ENCODE measurements at regions of chr10 and their contacts with region 1.

Region 1: DNA sequence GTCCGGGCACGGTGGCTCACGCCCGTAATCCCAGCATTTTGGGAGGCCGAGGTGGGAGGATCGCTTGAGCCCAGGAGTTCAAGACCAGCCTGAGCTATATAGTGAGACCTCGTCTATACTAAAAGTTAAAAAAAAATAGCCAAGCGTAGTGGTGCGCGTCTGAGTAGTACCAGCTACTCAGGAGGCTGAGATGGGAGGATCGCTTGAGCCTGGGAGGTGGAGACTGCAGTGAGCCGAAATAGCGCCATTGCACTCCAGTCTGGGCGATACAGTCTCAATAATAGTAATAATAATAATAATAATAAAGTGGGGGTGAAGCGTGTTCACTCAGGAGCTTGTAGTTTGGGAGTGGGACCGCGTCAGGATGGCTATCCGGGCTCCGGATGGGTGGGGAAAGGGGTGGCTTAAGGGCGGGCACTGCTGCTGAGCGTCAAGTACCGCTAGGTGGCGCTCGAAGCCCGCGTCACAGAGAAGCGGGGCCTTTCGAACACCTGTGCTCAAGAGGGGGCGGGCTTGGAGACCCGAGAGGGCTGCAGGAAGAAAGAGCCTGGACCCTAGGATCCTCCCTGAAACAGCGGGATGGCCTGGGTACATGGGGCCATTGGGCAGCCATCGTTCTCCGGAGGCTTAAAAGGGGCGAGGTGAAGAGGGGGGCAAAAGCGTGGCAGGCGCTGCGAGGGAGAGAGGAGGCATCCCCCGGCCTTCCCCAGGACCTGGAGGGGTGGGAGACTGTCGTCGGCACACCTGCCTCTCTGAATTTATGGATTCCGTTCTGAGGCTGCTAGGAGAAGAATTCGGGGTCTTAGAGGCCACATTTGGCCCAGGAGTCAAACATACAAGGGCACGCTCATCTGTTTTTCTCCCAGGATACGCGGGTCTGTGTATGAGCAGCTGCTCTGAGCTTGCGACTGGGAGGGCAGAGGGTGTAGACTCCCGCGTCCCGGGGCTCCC is 14.5 kb downstream of the LBX1 start:
- DNase-seq: peak; percentile 84
- H3K4me3 ChIP-seq: peak overlapping the region; percentile 19 to 67; a peak in 3 of 4 replicates
- H3K27ac ChIP-seq: no peak overlapping the region
- H3K4me1 ChIP-seq: peaks cover 0 to 35% of the 10 kb centered on the region in 2 experiments; a peak in 2 of 4 replicates
- H3K27me3 ChIP-seq: peaks cover 86% of the 10 kb centered on the region
- CTCF ChIP-seq: peak; percentile 93
- EP300 ChIP-seq: no peak
- RAD21 ChIP-seq: peak; percentile 77

Region 2: DNA sequence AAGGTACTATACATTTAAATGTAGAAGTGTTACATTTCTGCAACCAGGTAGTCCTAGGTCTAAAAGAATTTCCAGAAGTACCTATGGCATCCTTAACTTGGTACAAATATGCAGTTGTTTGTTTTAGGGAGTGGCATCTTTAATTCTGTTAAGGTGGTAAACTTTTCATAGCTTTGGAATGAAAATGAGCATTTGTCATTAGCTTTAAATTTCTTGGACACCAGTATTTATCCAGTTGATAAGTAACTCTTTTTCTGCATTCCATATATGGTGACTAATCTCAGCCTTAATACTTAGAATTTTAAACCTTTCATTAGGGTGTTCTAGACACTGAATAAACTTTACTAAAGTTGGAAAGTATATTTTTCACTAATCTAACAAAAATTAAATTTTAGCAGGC is 291.1 kb before region 1 on chr10:
- CTCF ChIA-PET with region 1: no interaction called
- POLR2A ChIA-PET with region 1: no interaction called
- DNase-seq: no peak
- H3K4me3 ChIP-seq: no peak overlapping the region
- H3K27ac ChIP-seq: no peak overlapping the region
- H3K4me1 ChIP-seq: no peaks in the 10 kb centered on the region
- H3K27me3 ChIP-seq: no peaks in the 10 kb centered on the region
- CTCF ChIP-seq: no peak
- EP300 ChIP-seq: no peak
- RAD21 ChIP-seq: no peak

Region 3: DNA sequence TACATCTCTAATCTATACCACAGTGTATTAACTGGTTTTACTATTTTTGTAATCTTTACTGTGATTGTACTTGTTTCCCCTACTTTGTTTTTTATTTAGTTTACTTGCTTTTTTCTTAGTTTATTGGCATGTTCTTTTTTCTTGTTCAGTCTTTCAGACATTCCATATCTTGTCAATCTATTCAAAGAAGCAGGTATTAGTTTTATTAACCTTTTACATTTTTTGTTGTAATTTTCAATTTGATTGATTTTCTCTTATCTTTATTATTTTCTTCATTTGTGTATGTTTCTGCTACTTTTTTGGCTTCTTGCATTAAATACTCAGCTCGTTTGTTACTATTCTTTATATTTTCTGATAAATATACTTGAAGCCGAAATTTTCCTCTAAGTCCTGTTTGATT is 42.0 kb before region 1 on chr10:
- CTCF ChIA-PET with region 1: interaction called, 38 read pairs
- POLR2A ChIA-PET with region 1: no interaction called
- DNase-seq: no peak
- H3K4me3 ChIP-seq: no peak overlapping the region
- H3K27ac ChIP-seq: no peak overlapping the region
- H3K4me1 ChIP-seq: no peaks in the 10 kb centered on the region
- H3K27me3 ChIP-seq: peaks cover 20% of the 10 kb centered on the region; the same call in 1 of the 2 replicates
- CTCF ChIP-seq: no peak
- EP300 ChIP-seq: no peak
- RAD21 ChIP-seq: no peak

Region 4: GRCh38 chr10:101258179-101258885 is 43.6 kb after region 1 on chr10:
- CTCF ChIA-PET with region 1: interaction called, 10 read pairs
- POLR2A ChIA-PET with region 1: no interaction called
- DNase-seq: no peak
- H3K4me3 ChIP-seq: no peak overlapping the region; a peak in 1 of 4 replicates
- H3K27ac ChIP-seq: no peak overlapping the region
- H3K4me1 ChIP-seq: no peaks in the 10 kb centered on the region
- H3K27me3 ChIP-seq: peaks cover 5% of the 10 kb centered on the region; the same call in 1 of the 2 replicates
- CTCF ChIP-seq: no peak
- EP300 ChIP-seq: no peak
- RAD21 ChIP-seq: no peak

Region 5: GRCh38 chr10:101446947-101447346 is 232.2 kb after region 1 on chr10:
- CTCF ChIA-PET with region 1: interaction called, 32 read pairs
- POLR2A ChIA-PET with region 1: no interaction called
- DNase-seq: no peak
- H3K4me3 ChIP-seq: no peak overlapping the region
- H3K27ac ChIP-seq: no peak overlapping the region
- H3K4me1 ChIP-seq: peaks cover 0 to 27% of the 10 kb centered on the region in 2 experiments; a peak in 2 of 4 replicates
- H3K27me3 ChIP-seq: no peaks in the 10 kb centered on the region
- CTCF ChIP-seq: no peak
- EP300 ChIP-seq: 0 out of 4 replicates have a peak, but pooled peaks of 1 of the 2 experiments have one; percentile 13
- RAD21 ChIP-seq: no peak

Region 6: GRCh38 chr10:101495324-101495925 is 280.7 kb after region 1 on chr10:
- CTCF ChIA-PET with region 1: interaction called, 23 read pairs
- POLR2A ChIA-PET with region 1: no interaction called
- DNase-seq: peak; percentile 43
- H3K4me3 ChIP-seq: no peak overlapping the region
- H3K27ac ChIP-seq: no peak overlapping the region
- H3K4me1 ChIP-seq: peaks cover 0 to 9% of the 10 kb centered on the region in 2 experiments; a peak in 2 of 4 replicates
- H3K27me3 ChIP-seq: no peaks in the 10 kb centered on the region
- CTCF ChIP-seq: peak; percentile 41
- EP300 ChIP-seq: no peak
- RAD21 ChIP-seq: peak; percentile 78

Region 7: DNA sequence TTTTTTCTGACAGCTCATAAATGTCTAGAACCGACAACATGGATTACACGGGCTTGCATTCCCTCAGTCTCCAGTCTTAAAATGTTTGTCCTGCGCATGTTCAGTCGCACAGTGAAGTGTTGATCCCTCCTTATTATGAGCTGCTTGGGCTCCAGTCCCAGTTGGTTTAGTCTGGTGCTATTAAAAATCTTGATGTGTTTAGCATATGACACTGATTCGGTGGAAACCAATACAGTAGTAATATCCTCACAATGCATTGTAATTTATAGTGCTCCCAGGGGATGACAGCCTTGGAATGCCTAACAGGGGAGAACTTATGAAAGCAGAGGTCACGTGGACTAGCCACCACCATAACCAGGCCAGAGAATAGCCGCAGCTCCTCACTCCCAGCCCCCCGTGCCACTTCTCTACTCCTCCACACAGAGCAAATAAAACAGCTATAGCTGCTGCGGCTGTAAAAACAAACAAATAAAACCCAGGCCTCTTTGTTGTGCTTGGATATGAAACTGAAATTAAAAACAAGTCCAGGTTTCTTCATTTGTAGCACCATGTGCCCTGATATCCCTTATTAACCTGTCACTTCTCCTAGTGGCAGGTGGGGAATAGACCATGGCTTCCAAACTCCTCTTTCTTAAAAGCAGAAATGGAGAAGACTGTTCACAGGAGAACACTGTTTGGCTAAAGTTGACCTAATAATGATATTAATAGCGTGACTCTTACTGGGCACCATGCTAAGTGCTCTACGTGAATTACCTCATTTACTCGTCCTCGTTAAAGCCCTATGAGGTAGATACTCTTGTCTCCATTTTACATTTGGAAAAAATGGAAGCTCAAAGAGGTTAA is 381.1 kb after region 1 on chr10:
- CTCF ChIA-PET with region 1: interaction called, 46 read pairs
- POLR2A ChIA-PET with region 1: no interaction called
- DNase-seq: no peak
- H3K4me3 ChIP-seq: no peak overlapping the region
- H3K27ac ChIP-seq: no peak overlapping the region
- H3K4me1 ChIP-seq: peaks cover 0 to 10% of the 10 kb centered on the region in 2 experiments; a peak in 1 of 4 replicates
- H3K27me3 ChIP-seq: no peaks in the 10 kb centered on the region
- CTCF ChIP-seq: no peak
- EP300 ChIP-seq: no peak
- RAD21 ChIP-seq: no peak

Measured in SK-N-SH (cell line).